Cardiac septum (tissue), 1 donor: ENCODE measurements at regions of chr17 and their contacts with region 1.

Region 1: GRCh38 chr17:78360371-78361224 is 721 bp upstream of the SOCS3 start:
- DNase-seq: peak; percentile 98

Region 2: GRCh38 chr17:78258323-78259191 is 102.0 kb before region 1 on chr17:
- intact Hi-C with region 1: loop called (anchors 5 kb)
- DNase-seq: peak; percentile 92

Region 3: DNA sequence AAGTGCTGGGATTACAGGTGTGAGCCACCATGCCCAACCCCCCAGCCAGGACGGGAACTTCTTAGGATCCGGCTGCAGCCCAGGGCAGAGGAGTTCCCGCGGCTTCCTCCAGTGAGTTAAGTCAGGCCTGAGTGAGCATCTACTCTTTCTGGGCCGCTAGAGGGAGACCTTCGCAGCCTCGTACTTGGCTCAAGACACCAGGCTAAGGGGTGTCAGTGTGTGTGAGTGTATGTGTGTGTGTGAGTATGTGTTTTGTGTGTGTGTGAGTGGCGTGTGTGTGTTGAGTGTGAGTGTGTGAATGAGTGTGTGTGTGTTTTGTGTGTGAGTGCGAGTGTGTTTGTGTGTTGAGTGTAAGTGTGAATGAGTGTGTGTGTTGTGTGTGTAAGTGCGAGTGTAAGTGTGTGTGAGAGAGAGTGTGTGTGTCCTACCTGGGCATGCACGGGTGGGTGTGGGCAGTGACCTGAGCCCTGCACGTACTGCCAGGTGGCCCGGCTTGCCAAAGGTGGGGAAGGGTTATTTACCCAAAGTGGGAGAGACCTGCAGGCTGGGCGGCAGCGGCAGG is 70.7 kb before region 1 on chr17:
- intact Hi-C with region 1: loop called (anchors 2 kb)
- DNase-seq: peak; percentile 93

Region 4: GRCh38 chr17:78313735-78314648 is 46.6 kb before region 1 on chr17:
- intact Hi-C with region 1: loop called (anchors 2 kb)
- DNase-seq: peak; percentile 83

Region 5: GRCh38 chr17:78341559-78342448 is 18.8 kb before region 1 on chr17:
- intact Hi-C with region 1: loop called (anchors 2 kb)
- DNase-seq: peak; percentile 92

Region 6: GRCh38 chr17:78397681-78398101 is 37.1 kb after region 1 on chr17:
- intact Hi-C with region 1: loop called (anchors 1 kb)
- DNase-seq: peak; percentile 75

Region 7: GRCh38 chr17:78421484-78422266 is 61.1 kb after region 1 on chr17:
- intact Hi-C with region 1: loop called (anchors 2 kb)
- DNase-seq: peak; percentile 93